Activated B cell treated with CpG ODN at 0.5 μM for 24 hours (primary cell): ENCODE measurements at regions of chr17 and their contacts with region 1.

Region 1: GRCh38 chr17:57114085-57114673 is 29.1 kb downstream of the AKAP1 start:
- DNase-seq: peak; percentile 57
- ATAC-seq: peak; percentile 79
- H3K4me3 Mint-ChIP-seq: no peak overlapping the region
- H3K27ac Mint-ChIP-seq: no peak overlapping the region
- H3K4me1 Mint-ChIP-seq: no peaks in the 10 kb centered on the region
- H3K27me3 Mint-ChIP-seq: no peaks in the 10 kb centered on the region
- CTCF ChIP-seq: no peak

Region 2: DNA sequence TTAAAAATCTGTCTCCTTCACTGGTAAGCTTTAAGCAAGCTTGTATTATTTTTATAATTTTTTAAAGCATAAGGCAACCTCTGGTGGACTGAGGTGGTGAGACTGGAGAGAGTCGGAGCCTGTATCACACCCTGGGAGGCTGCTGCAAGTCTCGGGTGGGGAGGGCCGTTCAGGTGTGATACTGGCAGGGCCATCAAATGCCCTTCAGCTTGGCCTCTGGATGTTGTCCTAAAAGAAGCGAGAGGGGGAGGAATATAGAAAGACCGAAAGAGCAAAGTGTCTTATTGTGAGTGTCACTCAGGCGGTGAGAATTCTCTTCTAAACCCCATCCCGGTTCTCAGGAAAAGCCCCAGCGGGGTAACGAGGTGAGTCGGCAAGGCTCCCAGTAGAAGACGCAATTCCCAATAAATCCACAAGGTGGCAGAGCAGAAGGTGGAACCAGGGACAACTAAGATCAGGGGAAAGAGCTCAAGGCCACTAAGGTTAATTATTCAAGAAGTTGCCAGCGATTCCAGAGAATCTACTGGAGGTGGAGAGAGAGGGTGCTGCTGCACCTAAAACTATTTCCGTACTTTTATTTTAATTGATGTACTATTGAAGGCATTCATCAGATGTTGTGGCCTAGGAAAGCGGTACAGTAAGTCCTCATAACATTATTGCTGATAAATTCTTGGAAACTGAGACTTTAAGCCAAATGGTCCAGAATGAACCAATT is 294.6 kb before region 1 on chr17:
- CTCF ChIA-PET with region 1: no interaction called
- POLR2A ChIA-PET with region 1: no interaction called
- intact Hi-C with region 1: loop called (anchors 2 kb)
- DNase-seq: peak; percentile 38
- ATAC-seq: peak; percentile 86
- H3K4me3 Mint-ChIP-seq: no peak overlapping the region
- H3K27ac Mint-ChIP-seq: no peak overlapping the region
- H3K4me1 Mint-ChIP-seq: peaks cover 4% of the 10 kb centered on the region
- H3K27me3 Mint-ChIP-seq: no peaks in the 10 kb centered on the region
- CTCF ChIP-seq: no peak

Region 3: DNA sequence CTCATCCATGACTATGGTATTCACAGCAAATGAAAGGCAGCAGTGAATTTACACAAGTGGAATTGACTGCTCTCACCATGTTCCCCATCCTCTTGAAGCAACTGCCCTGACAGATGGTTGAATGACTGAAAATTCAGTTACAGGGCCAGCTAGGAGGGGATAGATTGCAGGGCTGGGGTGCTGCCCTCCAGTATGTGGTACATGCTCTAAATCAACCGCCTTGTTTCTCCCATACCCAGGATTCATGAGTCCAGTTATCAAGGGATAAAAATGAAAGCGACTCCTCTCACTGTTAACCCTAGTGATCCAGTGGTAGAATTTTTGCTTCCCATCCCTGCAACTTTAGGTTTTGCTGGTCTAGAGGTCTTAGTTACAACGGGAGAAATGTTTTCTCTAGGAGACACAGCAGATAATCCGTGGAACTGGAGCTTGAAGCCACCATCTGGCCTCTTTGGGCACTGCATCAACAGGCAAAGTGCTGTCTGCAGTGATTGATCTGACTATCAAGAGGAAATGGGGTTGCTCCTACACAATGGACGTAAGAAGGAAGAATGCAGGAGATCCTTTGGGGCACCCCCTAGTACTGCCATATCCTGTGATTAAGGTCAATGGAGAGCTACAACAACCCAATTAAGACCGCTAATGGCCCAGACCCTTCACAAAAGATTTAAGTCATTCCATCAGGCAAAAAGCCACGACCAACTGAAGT is 104.3 kb before region 1 on chr17:
- CTCF ChIA-PET with region 1: no interaction called
- POLR2A ChIA-PET with region 1: no interaction called
- intact Hi-C with region 1: loop called (anchors 10 kb)
- DNase-seq: no peak
- ATAC-seq: peak; percentile 85
- H3K4me3 Mint-ChIP-seq: peak overlapping the region; percentile 38
- H3K27ac Mint-ChIP-seq: peak overlapping the region; percentile 1
- H3K4me1 Mint-ChIP-seq: peaks cover 35% of the 10 kb centered on the region
- H3K27me3 Mint-ChIP-seq: no peaks in the 10 kb centered on the region
- CTCF ChIP-seq: no peak

Region 4: GRCh38 chr17:57045868-57046704 is 68.1 kb before region 1 on chr17:
- CTCF ChIA-PET with region 1: no interaction called
- POLR2A ChIA-PET with region 1: no interaction called
- intact Hi-C with region 1: loop called (anchors 2 kb)
- DNase-seq: peak; percentile 36
- ATAC-seq: peak; percentile 60
- H3K4me3 Mint-ChIP-seq: peak overlapping the region; percentile 81
- H3K27ac Mint-ChIP-seq: no peak overlapping the region
- H3K4me1 Mint-ChIP-seq: peaks cover 23% of the 10 kb centered on the region
- H3K27me3 Mint-ChIP-seq: peaks cover 34% of the 10 kb centered on the region
- CTCF ChIP-seq: no peak